PC-3 (cell line): ENCODE measurements at regions of chr6 and their contacts with region 1.

Region 1: DNA sequence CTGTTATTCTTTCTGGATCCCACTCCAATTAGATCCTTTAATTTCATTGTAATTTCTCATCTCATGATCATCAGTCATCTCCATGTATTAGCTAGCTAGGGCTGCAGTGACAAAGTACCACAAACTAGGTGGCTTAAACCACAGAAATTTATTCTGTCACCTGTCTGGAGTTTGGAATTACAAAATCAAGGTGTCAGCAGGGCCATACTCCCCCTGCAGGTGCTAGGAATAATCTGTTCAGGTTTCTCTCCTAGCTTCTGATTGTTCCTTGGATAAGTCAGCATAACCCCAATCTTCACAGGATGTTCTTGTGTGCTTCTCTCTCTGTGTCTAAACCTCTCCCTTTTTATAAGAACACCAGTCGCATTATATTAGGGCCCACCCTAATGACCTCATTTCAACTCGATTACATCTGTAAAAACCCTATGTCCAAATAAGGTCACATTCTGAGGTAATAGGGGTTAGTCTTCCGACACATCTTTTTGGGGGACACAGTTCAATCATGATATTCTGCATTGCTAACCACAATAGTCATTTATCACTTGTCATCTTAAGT is 40.5 kb downstream of the BEND6 start:
- DNase-seq: peak; percentile 48
- ATAC-seq: peak; percentile 39
- H3K4me3 ChIP-seq: no peak overlapping the region
- H3K27ac ChIP-seq: no peak overlapping the region
- H3K4me1 ChIP-seq: peaks cover 14% of the 10 kb centered on the region; the same call in 1 of the 2 replicates
- H3K27me3 ChIP-seq: no peaks in the 10 kb centered on the region
- CTCF ChIP-seq: peak; percentile 66

Region 2: GRCh38 chr6:57029188-57029587 is 33.8 kb after region 1 on chr6:
- CTCF ChIA-PET with region 1: no interaction called
- POLR2A ChIA-PET with region 1: no interaction called
- intact Hi-C with region 1: no loop called
- DNase-seq: peak; percentile 56
- ATAC-seq: no peak
- H3K4me3 ChIP-seq: no peak overlapping the region
- H3K27ac ChIP-seq: no peak overlapping the region
- H3K4me1 ChIP-seq: peaks cover 29% of the 10 kb centered on the region
- H3K27me3 ChIP-seq: no peaks in the 10 kb centered on the region
- CTCF ChIP-seq: no peak

Region 3: GRCh38 chr6:57279013-57279412 is 283.6 kb after region 1 on chr6:
- CTCF ChIA-PET with region 1: no interaction called
- POLR2A ChIA-PET with region 1: interaction called, 11 read pairs
- intact Hi-C with region 1: no loop called
- DNase-seq: no peak
- ATAC-seq: no peak
- H3K4me3 ChIP-seq: no peak overlapping the region
- H3K27ac ChIP-seq: no peak overlapping the region
- H3K4me1 ChIP-seq: no peaks in the 10 kb centered on the region
- H3K27me3 ChIP-seq: no peaks in the 10 kb centered on the region
- CTCF ChIP-seq: no peak